ENCODE measurements at regions of chr6 and their contacts with region 1.

Region 1: DNA sequence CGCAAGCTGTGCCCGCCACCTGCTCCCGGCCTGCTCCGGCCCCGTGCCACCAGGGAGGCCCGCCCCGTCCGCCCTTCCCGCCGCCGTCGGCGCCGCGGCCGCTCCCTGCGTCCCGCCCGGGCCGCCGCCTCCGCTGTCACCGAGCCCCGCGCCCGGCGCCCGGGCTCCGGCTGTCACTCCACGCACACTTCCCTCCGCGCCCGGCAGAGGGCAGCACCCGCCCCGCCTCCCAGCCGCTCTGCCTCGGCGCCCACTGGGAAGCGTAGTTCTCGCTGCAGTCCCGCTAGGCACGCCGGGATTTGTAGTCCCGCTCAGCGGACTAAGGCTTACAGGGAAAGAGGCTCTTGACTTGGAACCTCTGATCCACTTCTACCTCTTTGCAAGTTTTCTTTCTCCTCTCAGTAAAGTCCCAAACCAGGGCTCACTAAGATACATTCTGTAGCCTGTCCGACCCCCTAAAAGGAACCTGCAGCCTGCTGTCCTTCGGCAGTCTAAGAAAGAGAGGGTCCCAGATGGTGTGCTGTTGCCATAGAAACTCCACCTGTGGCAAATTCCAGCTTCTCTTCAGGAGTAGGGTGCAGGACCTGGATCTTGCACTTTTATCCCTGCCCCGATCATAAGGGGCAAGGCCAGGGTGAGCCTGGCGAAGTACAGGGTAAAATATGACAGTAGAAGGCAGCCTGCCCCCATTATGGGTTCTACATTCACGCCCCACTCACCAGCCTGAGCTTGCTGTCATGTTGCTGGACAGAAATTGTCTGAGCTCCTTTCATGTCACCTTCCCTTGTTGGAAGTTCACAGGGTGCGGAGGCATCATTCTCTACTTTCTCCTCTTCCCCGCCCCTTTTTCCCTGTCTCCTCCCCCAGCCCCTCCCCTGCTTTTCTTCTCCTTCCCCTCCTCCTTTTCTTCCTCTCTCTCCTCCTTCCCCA is at the start of gene TFEB:
- DNase-seq: peak; percentile 89 to 96 (median 93)
- ATAC-seq: peak; percentile 70
- H3K4me3 ChIP-seq: peak within 1 kb of the TSS; percentile 73
- H3K4me3 Mint-ChIP-seq: peak within 1 kb of the TSS; percentile 97
- H3K27ac ChIP-seq: peak within 1 kb of the TSS; percentile 77 to 80
- H3K27ac Mint-ChIP-seq: peak within 1 kb of the TSS; percentile 88
- H3K4me1 ChIP-seq: peaks cover 37% of the 10 kb centered on the region
- H3K4me1 Mint-ChIP-seq: peaks cover 33% of the 10 kb centered on the region
- H3K27me3 ChIP-seq: peaks cover 0 to 3% of the 10 kb centered on the region in 2 experiments
- H3K27me3 Mint-ChIP-seq: no peaks in the 10 kb centered on the region
- CTCF ChIP-seq: peak; percentile 73
- total RNA-seq, gene TFEB: 23.8 to 24.1 TPM

Region 2: GRCh38 chr6:41545703-41546474 is 189.8 kb before region 1 on chr6 and contains the start of gene FOXP4:
- CTCF ChIA-PET with region 1: no interaction called
- POLR2A ChIA-PET with region 1: no interaction called
- intact Hi-C with region 1: loop called in 1 of 2 experiments (anchors 2 kb)
- DNase-seq: peak; percentile 69 to 93 (median 79)
- ATAC-seq: peak; percentile 87
- H3K4me3 ChIP-seq: peak within 1 kb of the TSS; percentile 69
- H3K4me3 Mint-ChIP-seq: peak within 1 kb of the TSS; percentile 93
- H3K27ac ChIP-seq: no peak within 1 kb of the TSS
- H3K27ac Mint-ChIP-seq: peak within 1 kb of the TSS; percentile 28
- H3K4me1 ChIP-seq: peaks cover 38% of the 10 kb centered on the region
- H3K4me1 Mint-ChIP-seq: peaks cover 30% of the 10 kb centered on the region
- H3K27me3 ChIP-seq: peaks cover 17 to 24% of the 10 kb centered on the region in 2 experiments
- H3K27me3 Mint-ChIP-seq: peaks cover 17% of the 10 kb centered on the region
- CTCF ChIP-seq: no peak
- total RNA-seq, gene FOXP4: 3.7 to 3.9 TPM

Region 3: GRCh38 chr6:41705996-41706835 is 29.5 kb before region 1 on chr6:
- CTCF ChIA-PET with region 1: interaction called, 5 read pairs
- POLR2A ChIA-PET with region 1: interaction called, 6 read pairs
- intact Hi-C with region 1: loop called in 1 of 2 experiments (anchors 2 kb)
- DNase-seq: peak in 12 of 14 experiments; percentile 15 to 75 (median 30)
- ATAC-seq: peak; percentile 50
- H3K4me3 ChIP-seq: no peak overlapping the region
- H3K4me3 Mint-ChIP-seq: no peak overlapping the region
- H3K27ac ChIP-seq: no peak overlapping the region
- H3K27ac Mint-ChIP-seq: peak overlapping the region; percentile 25
- H3K4me1 ChIP-seq: peaks cover 41% of the 10 kb centered on the region
- H3K4me1 Mint-ChIP-seq: peaks cover 38% of the 10 kb centered on the region
- H3K27me3 ChIP-seq: no peaks in the 10 kb centered on the region
- H3K27me3 Mint-ChIP-seq: no peaks in the 10 kb centered on the region
- CTCF ChIP-seq: no peak

Region 4: GRCh38 chr6:41787219-41787917 is 51.7 kb after region 1 on chr6 and contains the start of gene TOMM6:
- CTCF ChIA-PET with region 1: interaction called, 38 read pairs
- POLR2A ChIA-PET with region 1: interaction called, 31 read pairs
- intact Hi-C with region 1: loop called (anchors 2 kb)
- DNase-seq: peak; percentile 91 to 97 (median 93)
- ATAC-seq: peak; percentile 77
- H3K4me3 ChIP-seq: peak within 1 kb of the TSS; percentile 78
- H3K4me3 Mint-ChIP-seq: peak within 1 kb of the TSS; percentile 92
- H3K27ac ChIP-seq: peak within 1 kb of the TSS; percentile 87 to 89
- H3K27ac Mint-ChIP-seq: peak within 1 kb of the TSS; percentile 96
- H3K4me1 ChIP-seq: peaks cover 23% of the 10 kb centered on the region
- H3K4me1 Mint-ChIP-seq: peaks cover 27% of the 10 kb centered on the region
- H3K27me3 ChIP-seq: no peaks in the 10 kb centered on the region
- H3K27me3 Mint-ChIP-seq: no peaks in the 10 kb centered on the region
- CTCF ChIP-seq: peak; percentile 90
- total RNA-seq, gene TOMM6: 78.8 to 83.2 TPM

Region 5: DNA sequence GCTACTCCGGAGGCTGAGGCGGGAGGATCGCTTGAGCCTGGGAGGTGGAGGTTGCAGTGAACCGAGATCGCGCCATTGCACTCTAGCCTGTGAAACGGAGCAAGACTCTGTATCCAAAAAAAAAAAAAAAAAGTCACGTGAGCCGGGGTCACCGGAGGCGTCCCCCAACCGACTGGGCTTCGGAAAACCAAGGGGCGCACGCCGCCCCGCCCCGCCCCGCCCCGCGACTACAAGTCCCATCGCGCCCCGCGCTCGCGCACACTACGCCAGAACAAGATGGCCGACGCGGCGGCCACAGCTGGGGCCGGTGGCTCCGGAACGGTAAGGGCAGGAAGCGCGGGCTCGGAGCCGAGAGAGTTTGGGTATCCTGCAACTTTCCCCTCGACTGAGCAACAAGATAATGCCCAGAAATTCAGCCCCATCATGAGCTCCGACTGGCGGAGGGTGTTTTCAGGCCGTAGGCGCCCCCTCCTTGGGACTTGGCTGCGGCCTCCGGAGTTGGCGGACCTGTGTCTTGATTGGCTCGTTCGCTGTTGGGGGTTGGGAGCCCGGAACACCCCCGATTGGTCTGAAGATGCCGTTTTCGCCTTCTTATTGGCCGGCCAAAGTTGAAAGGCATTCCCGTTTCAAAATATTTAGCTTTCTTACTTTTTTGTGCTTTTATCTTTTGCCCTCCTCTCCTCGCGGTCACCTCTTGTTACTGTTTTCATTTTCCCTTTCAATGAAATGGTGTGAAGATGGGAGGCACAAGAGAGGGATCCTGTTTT is 314.8 kb after region 1 on chr6 and contains the start of gene TAF8:
- CTCF ChIA-PET with region 1: no interaction called
- POLR2A ChIA-PET with region 1: interaction called, 9 read pairs
- intact Hi-C with region 1: loop called in 1 of 2 experiments (anchors 2 kb)
- DNase-seq: peak; percentile 78 to 95 (median 84)
- ATAC-seq: peak; percentile 53
- H3K4me3 ChIP-seq: peak within 1 kb of the TSS; percentile 85
- H3K4me3 Mint-ChIP-seq: peak within 1 kb of the TSS; percentile 96
- H3K27ac ChIP-seq: peak within 1 kb of the TSS; percentile 85 to 89
- H3K27ac Mint-ChIP-seq: peak within 1 kb of the TSS; percentile 89
- H3K4me1 ChIP-seq: peaks cover 61% of the 10 kb centered on the region
- H3K4me1 Mint-ChIP-seq: peaks cover 72% of the 10 kb centered on the region
- H3K27me3 ChIP-seq: no peaks in the 10 kb centered on the region
- H3K27me3 Mint-ChIP-seq: no peaks in the 10 kb centered on the region
- CTCF ChIP-seq: no peak
- total RNA-seq, gene TAF8: 30.1 to 34.7 TPM

Region 6: DNA sequence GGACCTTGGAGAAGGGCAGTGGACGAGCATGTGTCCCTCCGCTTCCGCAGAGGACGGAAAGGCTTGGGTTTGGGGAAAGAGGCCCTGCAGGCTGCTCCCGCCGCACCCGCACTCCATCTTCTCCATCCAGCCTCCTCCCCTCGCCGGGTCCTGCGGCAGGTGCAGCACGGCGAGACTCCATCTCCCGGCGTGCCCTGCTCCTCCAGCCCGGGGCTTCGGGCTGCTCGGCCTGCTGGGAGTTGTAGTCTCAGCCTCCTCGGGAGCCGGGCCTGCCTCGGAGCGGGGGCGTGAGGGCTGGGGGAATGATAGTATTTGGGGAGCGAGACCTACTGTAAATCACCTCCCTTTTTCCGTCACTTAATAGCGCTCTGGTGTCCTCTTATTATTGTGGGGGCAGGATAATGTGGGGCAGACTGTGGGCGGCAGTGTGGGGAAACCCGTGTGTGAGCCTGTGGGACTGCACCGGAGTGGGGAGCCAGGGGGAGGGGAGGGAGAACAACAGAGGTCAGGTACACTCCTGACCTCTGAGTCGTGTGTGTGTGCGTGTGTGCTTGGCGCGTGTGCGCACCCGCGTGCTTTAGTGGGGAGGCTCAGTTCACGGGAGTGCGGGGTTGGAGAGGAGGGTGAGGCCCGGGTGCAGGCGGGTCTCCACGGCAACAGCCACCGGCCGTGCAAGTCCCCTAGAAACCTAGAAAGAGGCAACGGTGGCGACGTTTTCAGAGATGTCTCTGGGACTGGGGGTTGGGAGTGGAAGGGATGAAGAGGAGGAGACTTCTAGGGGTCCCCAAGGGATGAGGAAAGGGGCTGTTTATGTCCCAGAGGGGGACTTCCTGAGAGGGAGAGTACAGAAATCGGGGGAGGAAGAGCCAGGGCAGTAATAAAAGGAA is 1511.7 kb after region 1 on chr6:
- CTCF ChIA-PET with region 1: no interaction called
- POLR2A ChIA-PET with region 1: no interaction called
- intact Hi-C with region 1: loop called in 1 of 2 experiments (anchors 10 kb)
- DNase-seq: peak; percentile 65 to 89 (median 76)
- ATAC-seq: peak; percentile 97
- H3K4me3 ChIP-seq: peak overlapping the region; percentile 58
- H3K4me3 Mint-ChIP-seq: no peak overlapping the region
- H3K27ac ChIP-seq: peak overlapping the region; percentile 24 to 42
- H3K27ac Mint-ChIP-seq: peak overlapping the region; percentile 70
- H3K4me1 ChIP-seq: peaks cover 26% of the 10 kb centered on the region
- H3K4me1 Mint-ChIP-seq: peaks cover 22% of the 10 kb centered on the region
- H3K27me3 ChIP-seq: peaks cover 34 to 35% of the 10 kb centered on the region in 2 experiments
- H3K27me3 Mint-ChIP-seq: peaks cover 15% of the 10 kb centered on the region
- CTCF ChIP-seq: no peak

Region 7: DNA sequence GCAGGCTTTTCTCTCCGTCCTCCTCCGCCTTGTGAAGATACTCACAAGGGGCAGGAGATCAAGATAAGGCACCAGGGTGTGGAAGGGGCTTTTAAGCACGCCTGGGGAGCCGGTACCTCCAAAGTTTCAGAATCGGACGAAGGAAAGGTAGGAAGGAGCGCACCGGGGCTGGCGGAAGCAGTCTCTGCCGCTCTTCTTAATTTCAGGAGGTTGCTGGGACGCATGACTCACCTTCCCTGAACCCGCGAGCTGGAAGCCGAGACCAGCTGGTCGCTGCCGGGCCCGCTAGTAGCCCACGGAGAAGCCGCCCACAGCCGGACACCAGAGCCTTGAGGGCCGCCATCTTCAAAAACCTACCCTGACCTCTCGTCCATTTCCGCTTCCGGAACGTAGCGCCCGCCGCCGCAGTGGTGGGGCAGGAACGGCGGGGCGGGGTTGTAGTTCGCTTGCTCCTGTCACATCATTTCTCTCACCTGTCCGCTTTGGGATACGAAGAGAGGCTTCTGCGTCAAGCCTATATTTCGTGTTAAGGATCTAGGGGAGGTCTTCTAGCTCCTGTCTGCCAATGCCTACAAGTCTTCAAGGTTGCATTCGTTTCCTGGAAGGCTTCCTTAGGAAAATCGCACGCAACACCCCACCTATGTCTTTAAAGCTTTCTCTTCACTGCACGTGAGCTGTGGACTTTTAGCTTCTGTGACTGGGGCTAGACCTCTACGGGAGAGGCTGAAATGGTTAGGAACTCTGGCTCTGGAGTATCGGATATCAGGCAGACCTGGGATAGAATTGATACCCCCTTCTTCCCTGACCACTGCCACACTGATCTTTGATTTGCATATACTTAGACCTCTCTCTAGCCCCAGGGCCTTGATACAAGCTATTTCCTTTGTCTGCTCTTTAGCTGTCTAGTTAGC is 1952.0 kb after region 1 on chr6 and contains the start of gene MRPS18A:
- CTCF ChIA-PET with region 1: no interaction called
- POLR2A ChIA-PET with region 1: no interaction called
- intact Hi-C with region 1: loop called in 1 of 2 experiments (anchors 5 kb)
- DNase-seq: peak; percentile 57 to 86 (median 72)
- ATAC-seq: peak; percentile 95
- H3K4me3 ChIP-seq: peak within 1 kb of the TSS; percentile 75
- H3K4me3 Mint-ChIP-seq: peak within 1 kb of the TSS; percentile 96
- H3K27ac ChIP-seq: peak within 1 kb of the TSS; percentile 56 to 65
- H3K27ac Mint-ChIP-seq: peak within 1 kb of the TSS; percentile 83
- H3K4me1 ChIP-seq: peaks cover 33% of the 10 kb centered on the region
- H3K4me1 Mint-ChIP-seq: peaks cover 52% of the 10 kb centered on the region
- H3K27me3 ChIP-seq: peaks cover 0 to 1% of the 10 kb centered on the region in 2 experiments
- H3K27me3 Mint-ChIP-seq: no peaks in the 10 kb centered on the region
- CTCF ChIP-seq: no peak
- total RNA-seq, gene MRPS18A: 26.1 to 27.7 TPM